Naive thymus-derived CD4-positive, alpha-beta T cell (primary cell): ENCODE measurements at regions of chr6 and their contacts with region 1.

Region 1: GRCh38 chr6:26457806-26458688 is at the start of gene BTN2A1:
- DNase-seq: peak in 8 of 9 donors; percentile 59 to 86 (median 78)
- ATAC-seq: peak; percentile 99
- H3K4me3 ChIP-seq: peak within 1 kb of the TSS; percentile 93
- H3K4me3 Mint-ChIP-seq: peak within 1 kb of the TSS; percentile 90 to 100 (median 98)
- H3K27ac ChIP-seq: peak within 1 kb of the TSS; percentile 81
- H3K27ac Mint-ChIP-seq: peak within 1 kb of the TSS; percentile 89 to 99 (median 94)
- H3K4me1 ChIP-seq: peaks cover 27 to 38% of the 10 kb centered on the region in 2 donors
- H3K4me1 Mint-ChIP-seq: peaks cover 43 to 75% (median 60%) of the 10 kb centered on the region in 7 donors
- H3K27me3 ChIP-seq: no peaks in the 10 kb centered on the region
- H3K27me3 Mint-ChIP-seq: no peaks in the 10 kb centered on the region
- total RNA-seq, gene BTN2A1: 29.0 to 54.6 (median 37.2) TPM

Region 2: GRCh38 chr6:26107935-26108334 is 350.1 kb before region 1 on chr6:
- CTCF ChIA-PET with region 1: no interaction called
- POLR2A ChIA-PET with region 1: no interaction called
- intact Hi-C with region 1: no loop called
- DNase-seq: no peak
- ATAC-seq: no peak
- H3K4me3 ChIP-seq: no peak overlapping the region
- H3K4me3 Mint-ChIP-seq: no peak overlapping the region
- H3K27ac ChIP-seq: no peak overlapping the region
- H3K27ac Mint-ChIP-seq: no peak overlapping the region
- H3K4me1 ChIP-seq: peaks cover 4 to 12% of the 10 kb centered on the region in 2 donors
- H3K4me1 Mint-ChIP-seq: peaks cover 5 to 19% (median 16%) of the 10 kb centered on the region in 7 donors
- H3K27me3 ChIP-seq: no peaks in the 10 kb centered on the region
- H3K27me3 Mint-ChIP-seq: peaks cover 0 to 5% (median 0%) of the 10 kb centered on the region in 5 donors

Region 3: GRCh38 chr6:26363882-26364701 is 94.0 kb before region 1 on chr6:
- CTCF ChIA-PET with region 1: no interaction called
- POLR2A ChIA-PET with region 1: no interaction called
- intact Hi-C with region 1: loop called in 1 of 2 experiments (anchors 5 kb)
- DNase-seq: peak in 7 of 9 donors; percentile 22 to 51 (median 45)
- ATAC-seq: peak; percentile 24
- H3K4me3 ChIP-seq: peak overlapping the region; percentile 89
- H3K4me3 Mint-ChIP-seq: no peak overlapping the region
- H3K27ac ChIP-seq: peak overlapping the region; percentile 92
- H3K27ac Mint-ChIP-seq: no peak overlapping the region
- H3K4me1 ChIP-seq: peaks cover 32 to 37% of the 10 kb centered on the region in 2 donors
- H3K4me1 Mint-ChIP-seq: peaks cover 43 to 67% (median 56%) of the 10 kb centered on the region in 7 donors
- H3K27me3 ChIP-seq: no peaks in the 10 kb centered on the region
- H3K27me3 Mint-ChIP-seq: no peaks in the 10 kb centered on the region

Region 4: GRCh38 chr6:26401987-26402658 is 55.9 kb before region 1 on chr6 and contains the start of gene BTN3A1:
- CTCF ChIA-PET with region 1: no interaction called
- POLR2A ChIA-PET with region 1: no interaction called
- intact Hi-C with region 1: loop called (anchors 1 to 5 kb)
- DNase-seq: peak in 8 of 9 donors; percentile 65 to 85 (median 78)
- ATAC-seq: peak; percentile 93
- H3K4me3 ChIP-seq: peak within 1 kb of the TSS; percentile 95
- H3K4me3 Mint-ChIP-seq: peak within 1 kb of the TSS; percentile 94 to 100 (median 100)
- H3K27ac ChIP-seq: peak within 1 kb of the TSS; percentile 96
- H3K27ac Mint-ChIP-seq: peak within 1 kb of the TSS; percentile 97 to 100 (median 99)
- H3K4me1 ChIP-seq: peaks cover 35 to 37% of the 10 kb centered on the region in 2 donors
- H3K4me1 Mint-ChIP-seq: peaks cover 37 to 58% (median 53%) of the 10 kb centered on the region in 7 donors
- H3K27me3 ChIP-seq: no peaks in the 10 kb centered on the region
- H3K27me3 Mint-ChIP-seq: no peaks in the 10 kb centered on the region
- total RNA-seq, gene BTN3A1: 122 to 242 (median 235) TPM

Region 5: GRCh38 chr6:26439657-26440056 is 18.4 kb before region 1 on chr6:
- CTCF ChIA-PET with region 1: no interaction called
- POLR2A ChIA-PET with region 1: interaction called, 4 read pairs
- intact Hi-C with region 1: loop called (anchors 1 kb)
- DNase-seq: peak in 3 of 9 donors; percentile 7 to 35 (median 15)
- ATAC-seq: no peak
- H3K4me3 ChIP-seq: peak overlapping the region; percentile 94
- H3K4me3 Mint-ChIP-seq: peak overlapping the region; percentile 89 to 100 (median 98)
- H3K27ac ChIP-seq: peak overlapping the region; percentile 99
- H3K27ac Mint-ChIP-seq: peak overlapping the region; percentile 95 to 100 (median 99)
- H3K4me1 ChIP-seq: peaks cover 16 to 19% of the 10 kb centered on the region in 2 donors
- H3K4me1 Mint-ChIP-seq: peaks cover 27 to 52% (median 41%) of the 10 kb centered on the region in 7 donors
- H3K27me3 ChIP-seq: no peaks in the 10 kb centered on the region
- H3K27me3 Mint-ChIP-seq: no peaks in the 10 kb centered on the region

Region 6: GRCh38 chr6:26532699-26533531 is 74.9 kb after region 1 on chr6:
- CTCF ChIA-PET with region 1: no interaction called
- POLR2A ChIA-PET with region 1: interaction called, 4 read pairs
- intact Hi-C with region 1: loop called in 1 of 2 experiments (anchors 1 kb)
- DNase-seq: peak; percentile 67 to 94 (median 93)
- ATAC-seq: peak; percentile 57
- H3K4me3 ChIP-seq: peak overlapping the region; percentile 93
- H3K4me3 Mint-ChIP-seq: peak overlapping the region; percentile 83 to 99 (median 96)
- H3K27ac ChIP-seq: peak overlapping the region; percentile 72
- H3K27ac Mint-ChIP-seq: peak overlapping the region; percentile 88 to 98 (median 97)
- H3K4me1 ChIP-seq: peaks cover 14 to 23% of the 10 kb centered on the region in 2 donors
- H3K4me1 Mint-ChIP-seq: peaks cover 17 to 70% (median 45%) of the 10 kb centered on the region in 7 donors
- H3K27me3 ChIP-seq: no peaks in the 10 kb centered on the region
- H3K27me3 Mint-ChIP-seq: peaks cover 0 to 7% (median 0%) of the 10 kb centered on the region in 5 donors